ENCODE measurements at regions of chr11 and their contacts with region 1.

Region 1: GRCh38 chr11:17730608-17731462 is 3.7 kb upstream of the KCNC1 start:
- DNase-seq: peak; percentile 84
- H3K4me3 ChIP-seq: no peak overlapping the region
- H3K27ac ChIP-seq: no peak overlapping the region
- H3K4me1 ChIP-seq: no peaks in the 10 kb centered on the region
- H3K27me3 ChIP-seq: peaks cover 24% of the 10 kb centered on the region
- CTCF ChIP-seq: peak; percentile 68

Region 2: DNA sequence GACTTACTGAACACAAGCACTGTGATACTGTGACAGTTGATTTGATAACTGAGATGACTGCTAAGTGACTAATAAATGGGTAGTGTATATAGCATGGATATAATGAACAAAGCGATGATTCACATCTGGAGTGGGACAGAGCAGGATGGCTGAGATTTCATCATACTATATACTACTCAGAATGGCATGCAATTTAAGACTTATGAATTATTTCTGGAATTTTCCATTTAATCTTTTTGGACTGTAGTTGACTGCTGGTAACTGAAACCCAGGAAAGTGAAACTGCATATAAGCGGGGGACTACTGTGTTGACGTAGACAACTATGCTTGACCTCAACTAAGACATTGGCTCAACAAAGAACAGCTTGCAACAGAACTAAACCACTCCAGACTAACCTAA is 474.3 kb before region 1 on chr11:
- CTCF ChIA-PET with region 1: no interaction called
- POLR2A ChIA-PET with region 1: no interaction called
- intact Hi-C with region 1: no loop called
- DNase-seq: peak; percentile 17
- H3K4me3 ChIP-seq: no peak overlapping the region
- H3K27ac ChIP-seq: no peak overlapping the region
- H3K4me1 ChIP-seq: no peaks in the 10 kb centered on the region
- H3K27me3 ChIP-seq: no peaks in the 10 kb centered on the region
- CTCF ChIP-seq: no peak

Region 3: DNA sequence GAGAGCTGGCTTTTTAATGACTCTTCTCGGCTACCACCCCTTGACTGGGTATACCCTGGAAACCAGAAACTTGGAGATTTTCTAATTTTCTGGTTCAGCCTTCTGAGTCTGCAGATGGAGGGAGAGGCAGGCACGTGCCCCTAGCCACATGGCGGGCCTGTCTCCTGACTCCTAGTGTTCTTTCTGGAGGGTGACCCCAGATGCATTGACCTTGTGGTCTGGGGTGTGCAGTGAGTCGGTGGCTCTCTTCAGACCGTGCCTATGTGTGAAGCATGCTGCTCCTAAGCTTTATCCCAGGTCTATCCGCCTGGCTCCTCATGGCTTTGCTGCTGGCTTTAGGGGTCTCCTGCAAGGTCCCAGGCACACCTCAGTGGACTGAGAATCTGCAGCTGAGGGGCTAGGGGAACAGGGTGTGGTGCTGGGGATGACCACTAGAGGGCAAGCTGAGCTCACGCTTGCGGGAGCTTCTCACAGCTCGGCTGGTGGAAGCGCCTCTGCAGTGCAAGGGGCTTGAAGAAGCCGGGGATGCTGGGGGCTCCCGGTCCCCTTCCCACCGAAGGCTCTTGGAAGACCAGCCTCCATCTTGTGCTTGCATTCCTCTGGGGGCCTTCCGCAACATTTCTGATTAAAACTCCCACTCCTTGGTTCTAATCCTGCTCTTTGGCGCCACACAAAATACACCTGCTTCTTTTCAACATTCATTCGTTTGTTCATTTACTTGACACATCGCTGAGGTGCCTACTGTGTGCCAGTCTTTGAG is 132.0 kb before region 1 on chr11:
- CTCF ChIA-PET with region 1: interaction called, 11 read pairs
- POLR2A ChIA-PET with region 1: no interaction called
- intact Hi-C with region 1: loop called (anchors 2 kb)
- DNase-seq: peak; percentile 67
- H3K4me3 ChIP-seq: no peak overlapping the region
- H3K27ac ChIP-seq: no peak overlapping the region
- H3K4me1 ChIP-seq: no peaks in the 10 kb centered on the region
- H3K27me3 ChIP-seq: no peaks in the 10 kb centered on the region
- CTCF ChIP-seq: peak; percentile 84

Region 4: GRCh38 chr11:17707830-17708229 is 23.0 kb before region 1 on chr11:
- CTCF ChIA-PET with region 1: no interaction called
- POLR2A ChIA-PET with region 1: no interaction called
- intact Hi-C with region 1: no loop called
- DNase-seq: no peak
- H3K4me3 ChIP-seq: no peak overlapping the region
- H3K27ac ChIP-seq: no peak overlapping the region
- H3K4me1 ChIP-seq: no peaks in the 10 kb centered on the region
- H3K27me3 ChIP-seq: peaks cover 19% of the 10 kb centered on the region
- CTCF ChIP-seq: no peak

Region 5: GRCh38 chr11:17779872-17780594 is 49.2 kb after region 1 on chr11:
- CTCF ChIA-PET with region 1: no interaction called
- POLR2A ChIA-PET with region 1: no interaction called
- intact Hi-C with region 1: no loop called
- DNase-seq: no peak
- H3K4me3 ChIP-seq: no peak overlapping the region
- H3K27ac ChIP-seq: no peak overlapping the region
- H3K4me1 ChIP-seq: no peaks in the 10 kb centered on the region
- H3K27me3 ChIP-seq: no peaks in the 10 kb centered on the region
- CTCF ChIP-seq: no peak

Region 6: GRCh38 chr11:17972987-17973386 is 242.2 kb after region 1 on chr11:
- CTCF ChIA-PET with region 1: interaction called, 55 read pairs
- POLR2A ChIA-PET with region 1: no interaction called
- intact Hi-C with region 1: loop called (anchors 1 kb)
- DNase-seq: peak; percentile 73
- H3K4me3 ChIP-seq: no peak overlapping the region
- H3K27ac ChIP-seq: no peak overlapping the region
- H3K4me1 ChIP-seq: no peaks in the 10 kb centered on the region
- H3K27me3 ChIP-seq: no peaks in the 10 kb centered on the region
- CTCF ChIP-seq: peak; percentile 80

Measured in A673 (cell line).